ENCODE measurements at regions of chr5 and their contacts with region 1.

Region 1: GRCh38 chr5:56200856-56201666 is 32.1 kb downstream of the ANKRD55 start:
- DNase-seq: peak; percentile 76 to 91
- H3K4me3 ChIP-seq: no peak overlapping the region
- H3K27ac ChIP-seq: no peak overlapping the region
- H3K4me1 ChIP-seq: peaks cover 0 to 14% (median 4%) of the 10 kb centered on the region in 4 donors
- H3K27me3 ChIP-seq: no peaks in the 10 kb centered on the region
- CTCF ChIP-seq: peak in 5 of 7 experiments; percentile 32 to 85 (median 78)
- EP300 ChIP-seq: no peak
- POLR2A ChIP-seq: no peak

Region 2: DNA sequence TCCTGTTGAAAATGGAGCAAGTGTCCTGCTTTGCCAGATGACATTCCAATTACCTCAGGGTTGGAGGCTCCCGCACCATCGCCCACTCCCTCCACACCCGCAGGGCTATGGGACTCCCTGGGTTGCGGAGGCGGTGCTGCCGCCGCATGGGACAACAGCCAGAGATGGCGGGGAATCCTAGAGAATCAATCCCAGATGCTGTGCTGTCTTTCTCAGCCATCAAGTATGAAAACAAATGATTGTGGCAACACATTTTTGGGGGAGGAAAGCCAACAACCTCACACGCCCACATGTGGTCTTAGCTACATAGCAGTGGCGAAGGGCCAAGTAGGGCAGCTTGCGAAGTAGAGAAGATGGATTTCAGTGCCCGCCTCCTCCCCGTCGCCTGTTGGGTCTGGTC is 303.2 kb before region 1 on chr5:
- intact Hi-C with region 1: no loop called
- DNase-seq: peak in 1 of 2 donors; percentile 39
- H3K4me3 ChIP-seq: no peak overlapping the region
- H3K27ac ChIP-seq: no peak overlapping the region
- H3K4me1 ChIP-seq: no peaks in the 10 kb centered on the region
- H3K27me3 ChIP-seq: no peaks in the 10 kb centered on the region
- CTCF ChIP-seq: no peak
- EP300 ChIP-seq: no peak
- POLR2A ChIP-seq: no peak

Region 3: DNA sequence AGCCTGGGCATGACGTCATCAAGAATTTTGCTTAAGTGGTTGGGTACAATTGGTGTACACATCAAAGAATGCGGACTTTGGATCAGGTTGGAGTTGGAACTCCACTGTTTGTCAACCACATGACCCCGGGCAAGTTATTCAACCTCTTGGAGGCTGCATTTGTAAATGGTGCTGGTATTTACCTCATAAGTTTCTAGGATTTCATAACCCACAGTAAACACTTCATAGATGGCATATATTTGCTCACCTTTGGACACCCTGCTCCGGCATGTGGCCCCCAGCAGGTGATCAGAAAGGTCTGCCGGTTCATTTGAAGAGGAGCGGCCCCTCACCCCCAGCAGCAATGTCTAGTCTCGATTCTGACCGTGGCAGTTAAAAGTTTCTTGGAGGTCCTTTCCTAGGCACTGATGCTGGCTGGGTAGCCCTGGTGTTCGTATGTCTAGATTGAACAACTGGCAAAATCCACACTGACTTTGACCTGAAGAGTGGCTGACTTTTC is 266.9 kb before region 1 on chr5:
- intact Hi-C with region 1: loop called (anchors 5 kb)
- DNase-seq: peak; percentile 50 to 84
- H3K4me3 ChIP-seq: no peak overlapping the region
- H3K27ac ChIP-seq: peak overlapping the region in 4 of 5 donors; percentile 14 to 53 (median 40)
- H3K4me1 ChIP-seq: peaks cover 0 to 23% (median 0%) of the 10 kb centered on the region in 4 donors
- H3K27me3 ChIP-seq: no peaks in the 10 kb centered on the region
- CTCF ChIP-seq: no peak
- EP300 ChIP-seq: no peak
- POLR2A ChIP-seq: no peak

Region 4: GRCh38 chr5:55969956-55970355 is 231.1 kb before region 1 on chr5:
- intact Hi-C with region 1: loop called (anchors 10 kb)
- DNase-seq: no peak
- H3K4me3 ChIP-seq: no peak overlapping the region
- H3K27ac ChIP-seq: no peak overlapping the region
- H3K4me1 ChIP-seq: peaks cover 0 to 24% (median 10%) of the 10 kb centered on the region in 4 donors
- H3K27me3 ChIP-seq: no peaks in the 10 kb centered on the region
- CTCF ChIP-seq: no peak
- EP300 ChIP-seq: no peak
- POLR2A ChIP-seq: no peak

Region 5: GRCh38 chr5:56050551-56051255 is 150.4 kb before region 1 on chr5:
- intact Hi-C with region 1: no loop called
- DNase-seq: no peak
- H3K4me3 ChIP-seq: no peak overlapping the region
- H3K27ac ChIP-seq: peak overlapping the region in 4 of 5 donors; percentile 31 to 70 (median 44)
- H3K4me1 ChIP-seq: peaks cover 9 to 21% (median 12%) of the 10 kb centered on the region in 4 donors
- H3K27me3 ChIP-seq: no peaks in the 10 kb centered on the region
- CTCF ChIP-seq: no peak
- EP300 ChIP-seq: no peak
- POLR2A ChIP-seq: no peak

Region 6: DNA sequence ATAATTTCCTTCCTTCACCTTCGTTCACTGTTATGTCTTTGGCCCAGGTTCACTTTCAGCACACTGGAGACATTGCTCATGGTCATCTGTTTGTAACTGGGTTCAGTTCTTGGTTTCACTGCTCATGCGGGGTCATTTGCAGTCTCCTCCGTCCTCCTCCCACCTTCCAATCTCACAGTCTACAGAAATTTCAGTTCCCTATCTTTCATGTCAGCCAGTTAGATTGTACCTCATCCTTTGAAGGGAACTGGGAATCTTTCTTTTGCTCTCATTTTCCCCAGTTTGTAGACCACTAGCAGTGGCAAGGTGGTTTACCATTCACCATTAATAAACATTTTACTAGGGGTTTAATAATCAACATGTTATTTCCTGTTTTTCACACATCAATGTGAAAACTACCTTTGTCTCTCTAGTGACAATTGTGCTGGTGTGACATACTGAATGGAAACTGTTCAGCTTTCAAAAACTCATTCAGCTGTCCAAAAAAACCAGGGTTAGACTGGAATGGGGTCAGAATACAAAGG is 105.4 kb before region 1 on chr5:
- intact Hi-C with region 1: no loop called
- DNase-seq: no peak
- H3K4me3 ChIP-seq: no peak overlapping the region
- H3K27ac ChIP-seq: no peak overlapping the region
- H3K4me1 ChIP-seq: peaks cover 0 to 36% (median 6%) of the 10 kb centered on the region in 4 donors
- H3K27me3 ChIP-seq: no peaks in the 10 kb centered on the region
- CTCF ChIP-seq: no peak
- EP300 ChIP-seq: no peak
- POLR2A ChIP-seq: no peak

Measured in stomach (tissue), 19 donors.